ENCODE measurements at regions of chr16 and their contacts with region 1.

Region 1: GRCh38 chr16:81623363-81624102 is 155.6 kb upstream of the PLCG2 start:
- DNase-seq: peak; percentile 60
- H3K4me3 ChIP-seq: no peak overlapping the region
- H3K27ac ChIP-seq: peak overlapping the region; percentile 51
- H3K4me1 ChIP-seq: peaks cover 55% of the 10 kb centered on the region
- H3K27me3 ChIP-seq: no peaks in the 10 kb centered on the region
- CTCF ChIP-seq: peak; percentile 59 to 65

Region 2: DNA sequence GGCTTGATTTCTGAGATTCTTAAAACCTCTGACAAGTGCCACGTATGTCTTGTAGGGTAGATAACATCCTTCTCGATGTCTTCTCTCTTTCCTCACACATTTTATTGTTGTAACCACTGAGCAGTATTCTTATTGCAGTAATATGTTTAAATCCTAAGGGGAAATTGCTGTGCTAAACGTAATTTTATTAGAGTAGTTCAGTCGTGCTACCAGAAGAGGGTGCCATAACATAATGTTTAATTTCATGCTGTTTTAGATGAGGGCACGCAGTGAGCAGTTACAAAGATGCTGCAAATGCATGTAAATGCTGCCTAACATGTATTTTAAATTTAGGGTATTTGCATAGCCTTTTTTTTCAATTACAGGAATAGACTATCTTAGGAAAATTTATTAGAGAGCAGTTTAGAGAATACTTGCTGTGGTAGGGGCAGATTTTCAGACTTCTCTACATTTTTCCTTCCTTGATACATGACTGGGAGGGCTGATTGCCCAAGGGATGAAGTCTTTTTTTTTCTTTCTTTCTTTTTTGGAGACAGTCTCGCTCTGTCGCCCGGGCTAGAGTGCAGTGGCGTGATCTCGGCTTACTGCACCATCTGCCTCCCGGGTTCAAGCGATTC is 257.1 kb before region 1 on chr16:
- CTCF ChIA-PET with region 1: no interaction called
- dilution Hi-C with region 1: loop called (anchors 5 kb)
- in situ Hi-C with region 1: no loop called
- intact Hi-C with region 1: no loop called
- DNase-seq: peak; percentile 42
- H3K4me3 ChIP-seq: no peak overlapping the region
- H3K27ac ChIP-seq: no peak overlapping the region
- H3K4me1 ChIP-seq: peaks cover 3% of the 10 kb centered on the region
- H3K27me3 ChIP-seq: no peaks in the 10 kb centered on the region
- CTCF ChIP-seq: peak; percentile 53 to 57

Region 3: DNA sequence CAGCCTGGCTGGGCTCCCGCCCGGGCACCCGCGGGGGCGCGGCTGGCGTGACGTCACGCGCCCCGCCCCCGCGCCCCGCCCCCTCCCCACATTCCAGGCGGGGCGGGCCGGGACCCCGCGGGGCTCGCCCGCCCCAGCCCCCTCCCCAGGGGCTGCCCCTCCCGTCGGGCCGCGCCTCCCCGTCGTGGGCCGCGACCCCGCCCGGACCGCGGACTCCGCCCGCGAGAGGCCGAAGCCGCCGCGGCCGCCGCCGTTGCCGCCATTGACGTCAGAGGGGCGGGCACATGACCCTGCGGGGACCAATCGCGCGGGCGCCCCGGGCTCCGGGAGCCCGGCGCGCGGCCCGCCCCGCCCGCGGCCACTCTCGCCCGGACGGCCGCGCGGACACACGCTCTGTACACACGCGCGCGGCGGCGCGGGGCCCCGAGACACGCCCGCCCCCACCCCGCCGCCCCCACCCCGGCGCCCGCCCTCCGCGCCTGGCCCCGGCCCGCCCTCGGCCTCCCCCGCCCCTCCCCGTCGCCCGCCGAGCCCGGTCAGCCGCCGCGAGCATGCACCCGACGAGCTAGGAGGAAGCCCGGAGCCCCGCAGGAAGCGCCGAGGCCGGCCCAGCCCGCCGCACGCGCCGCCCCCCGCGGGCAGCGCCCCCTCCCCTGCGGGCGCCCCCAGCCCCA is 178.9 kb before region 1 on chr16 and contains the start of gene CMIP:
- CTCF ChIA-PET with region 1: no interaction called
- dilution Hi-C with region 1: no loop called
- in situ Hi-C with region 1: no loop called
- intact Hi-C with region 1: loop called (anchors 2 kb)
- DNase-seq: peak; percentile 74
- H3K4me3 ChIP-seq: peak within 1 kb of the TSS; percentile 69 to 94 (median 72)
- H3K27ac ChIP-seq: peak within 1 kb of the TSS; percentile 93
- H3K4me1 ChIP-seq: peaks cover 26% of the 10 kb centered on the region
- H3K27me3 ChIP-seq: no peaks in the 10 kb centered on the region
- CTCF ChIP-seq: no peak
- total RNA-seq, gene CMIP: 44.5 to 98.5 TPM

Region 4: GRCh38 chr16:81466356-81466980 is 157.1 kb before region 1 on chr16:
- CTCF ChIA-PET with region 1: no interaction called
- dilution Hi-C with region 1: no loop called
- in situ Hi-C with region 1: no loop called
- intact Hi-C with region 1: no loop called
- DNase-seq: no peak
- H3K4me3 ChIP-seq: no peak overlapping the region
- H3K27ac ChIP-seq: no peak overlapping the region
- H3K4me1 ChIP-seq: no peaks in the 10 kb centered on the region
- H3K27me3 ChIP-seq: no peaks in the 10 kb centered on the region
- CTCF ChIP-seq: no peak

Region 5: DNA sequence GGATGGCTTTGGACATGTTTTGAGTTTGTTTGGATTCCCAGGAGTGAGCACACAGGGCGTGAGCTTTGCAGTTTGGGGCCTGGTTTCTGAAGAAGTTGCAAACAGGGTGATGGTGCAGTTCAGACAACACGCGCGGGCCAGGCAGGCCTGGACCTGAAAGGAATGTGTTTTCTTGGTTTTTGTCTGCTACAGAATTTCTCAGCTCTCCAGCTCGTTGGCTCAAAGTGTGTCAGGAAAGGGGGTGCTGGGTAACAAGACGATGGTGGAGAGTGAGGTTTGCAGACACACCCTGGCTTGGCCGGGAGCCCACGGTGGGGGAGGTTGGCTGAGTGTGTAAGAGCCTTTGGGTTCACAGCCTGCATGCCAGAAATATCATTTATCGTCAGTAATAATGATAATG is 96.6 kb before region 1 on chr16:
- CTCF ChIA-PET with region 1: no interaction called
- dilution Hi-C with region 1: loop called (anchors 5 kb)
- in situ Hi-C with region 1: no loop called
- intact Hi-C with region 1: loop called (anchors 1 kb)
- DNase-seq: peak; percentile 100
- H3K4me3 ChIP-seq: no peak overlapping the region
- H3K27ac ChIP-seq: peak overlapping the region; percentile 100
- H3K4me1 ChIP-seq: peaks cover 82% of the 10 kb centered on the region
- H3K27me3 ChIP-seq: no peaks in the 10 kb centered on the region
- CTCF ChIP-seq: no peak

Region 6: DNA sequence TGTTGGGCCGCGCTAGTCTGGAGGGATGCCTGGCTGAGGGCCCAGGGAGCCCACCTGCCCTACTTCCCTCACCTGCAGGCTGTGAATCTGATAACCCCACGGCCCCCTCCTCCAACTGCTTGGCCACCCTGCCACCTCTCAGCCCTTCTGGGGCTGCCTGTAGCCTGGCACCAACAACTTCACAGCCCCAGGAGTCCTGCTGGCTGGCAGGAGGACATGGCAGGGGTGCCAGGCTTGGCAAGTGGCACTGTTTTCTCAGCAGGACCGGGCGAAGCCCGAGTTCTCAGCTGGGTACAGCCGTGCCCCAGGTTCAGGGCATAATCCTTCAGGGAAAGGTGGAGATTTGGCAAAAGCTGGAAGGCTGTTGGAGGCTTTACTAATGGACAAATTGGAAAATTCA is 49.4 kb before region 1 on chr16:
- CTCF ChIA-PET with region 1: no interaction called
- dilution Hi-C with region 1: no loop called
- in situ Hi-C with region 1: no loop called
- intact Hi-C with region 1: no loop called
- DNase-seq: no peak
- H3K4me3 ChIP-seq: no peak overlapping the region
- H3K27ac ChIP-seq: no peak overlapping the region
- H3K4me1 ChIP-seq: peaks cover 19% of the 10 kb centered on the region
- H3K27me3 ChIP-seq: no peaks in the 10 kb centered on the region
- CTCF ChIP-seq: no peak

Region 7: GRCh38 chr16:81600901-81601428 is 22.6 kb before region 1 on chr16:
- CTCF ChIA-PET with region 1: no interaction called
- dilution Hi-C with region 1: no loop called
- in situ Hi-C with region 1: no loop called
- intact Hi-C with region 1: loop called (anchors 2 kb)
- DNase-seq: peak; percentile 97
- H3K4me3 ChIP-seq: no peak overlapping the region
- H3K27ac ChIP-seq: peak overlapping the region; percentile 93
- H3K4me1 ChIP-seq: peaks cover 54% of the 10 kb centered on the region
- H3K27me3 ChIP-seq: no peaks in the 10 kb centered on the region
- CTCF ChIP-seq: no peak

Region 8: GRCh38 chr16:81703177-81704155 is 79.9 kb after region 1 on chr16:
- CTCF ChIA-PET with region 1: no interaction called
- dilution Hi-C with region 1: loop called (anchors 10 kb)
- in situ Hi-C with region 1: no loop called
- intact Hi-C with region 1: no loop called
- DNase-seq: peak; percentile 59
- H3K4me3 ChIP-seq: no peak overlapping the region
- H3K27ac ChIP-seq: no peak overlapping the region
- H3K4me1 ChIP-seq: peaks cover 13% of the 10 kb centered on the region
- H3K27me3 ChIP-seq: no peaks in the 10 kb centered on the region
- CTCF ChIP-seq: no peak

Region 9: DNA sequence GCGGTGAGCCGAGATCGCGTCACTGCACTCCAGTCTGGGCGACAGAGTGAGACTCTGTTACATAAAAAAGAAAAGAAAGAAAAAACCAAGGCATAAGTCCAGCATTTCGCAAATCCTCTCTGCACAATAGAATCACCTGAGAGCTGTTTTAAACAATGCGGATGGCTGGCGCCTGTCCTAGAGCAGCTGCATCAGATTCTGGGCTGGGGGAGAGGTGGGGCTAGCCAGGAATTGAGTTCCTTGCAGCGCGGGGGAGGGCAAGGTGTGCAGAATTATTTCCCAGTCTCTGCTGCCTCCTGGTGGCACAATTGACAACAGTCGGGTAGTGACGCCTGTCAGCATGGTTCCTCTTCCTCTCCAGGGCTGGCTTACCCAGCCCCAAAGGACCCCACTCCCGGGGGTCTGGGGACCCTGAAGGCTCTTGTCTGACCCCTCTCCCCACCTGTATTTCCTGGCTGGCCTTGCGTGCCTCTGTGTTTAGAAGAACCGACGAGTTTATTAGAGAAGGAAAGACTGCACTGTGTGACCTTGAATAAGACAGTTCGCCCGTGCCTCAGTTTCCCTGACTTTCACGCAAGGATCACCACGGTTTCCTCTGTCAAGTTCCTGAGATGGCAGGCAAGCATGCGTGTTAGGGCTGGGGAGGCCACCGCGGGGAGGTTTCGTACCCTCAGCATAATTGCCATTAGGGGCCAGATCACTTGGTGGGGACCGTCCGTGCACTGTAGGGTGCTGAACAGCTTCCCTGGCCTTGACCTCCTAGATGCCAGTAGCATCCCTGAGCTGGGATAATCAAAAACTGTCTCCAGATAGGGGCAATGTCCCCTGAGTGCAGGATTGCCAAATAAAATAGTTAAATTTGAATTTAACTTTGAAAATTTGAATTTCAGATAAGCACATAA is 114.6 kb after region 1 on chr16:
- CTCF ChIA-PET with region 1: no interaction called
- dilution Hi-C with region 1: loop called (anchors 5 kb)
- in situ Hi-C with region 1: no loop called
- intact Hi-C with region 1: no loop called
- DNase-seq: peak; percentile 88
- H3K4me3 ChIP-seq: peak overlapping the region in 1 of 3 experiments; percentile 18
- H3K27ac ChIP-seq: no peak overlapping the region
- H3K4me1 ChIP-seq: peaks cover 3% of the 10 kb centered on the region
- H3K27me3 ChIP-seq: no peaks in the 10 kb centered on the region
- CTCF ChIP-seq: peak; percentile 81 to 83

Measured in mammary epithelial cell (primary cell).